CD8-positive, alpha-beta T cell (primary cell): ENCODE measurements at regions of chr1 and their contacts with region 1.

Region 1: GRCh38 chr1:153058826-153059784 is 1.8 kb upstream of the SPRR2A start:
- DNase-seq: no peak
- ATAC-seq: no peak
- H3K4me3 ChIP-seq: no peak overlapping the region
- H3K4me3 Mint-ChIP-seq: no peak overlapping the region
- H3K27ac ChIP-seq: no peak overlapping the region
- H3K27ac Mint-ChIP-seq: no peak overlapping the region
- H3K4me1 ChIP-seq: no peaks in the 10 kb centered on the region
- H3K4me1 Mint-ChIP-seq: no peaks in the 10 kb centered on the region
- H3K27me3 ChIP-seq: peaks cover 0 to 2% of the 10 kb centered on the region in 2 experiments
- H3K27me3 Mint-ChIP-seq: peaks cover 19% of the 10 kb centered on the region
- CTCF ChIP-seq: no peak

Region 2: GRCh38 chr1:153081736-153082135 is 22.6 kb after region 1 on chr1:
- CTCF ChIA-PET with region 1: no interaction called
- POLR2A ChIA-PET with region 1: no interaction called
- intact Hi-C with region 1: loop called in 1 of 2 experiments (anchors 1 kb)
- DNase-seq: no peak
- ATAC-seq: no peak
- H3K4me3 ChIP-seq: no peak overlapping the region
- H3K4me3 Mint-ChIP-seq: no peak overlapping the region
- H3K27ac ChIP-seq: no peak overlapping the region
- H3K27ac Mint-ChIP-seq: no peak overlapping the region
- H3K4me1 ChIP-seq: no peaks in the 10 kb centered on the region
- H3K4me1 Mint-ChIP-seq: no peaks in the 10 kb centered on the region
- H3K27me3 ChIP-seq: peaks cover 0 to 2% of the 10 kb centered on the region in 2 experiments
- H3K27me3 Mint-ChIP-seq: peaks cover 25% of the 10 kb centered on the region
- CTCF ChIP-seq: no peak